BJ (cell line): ENCODE measurements at regions of chr19 and their contacts with region 1.

Region 1: DNA sequence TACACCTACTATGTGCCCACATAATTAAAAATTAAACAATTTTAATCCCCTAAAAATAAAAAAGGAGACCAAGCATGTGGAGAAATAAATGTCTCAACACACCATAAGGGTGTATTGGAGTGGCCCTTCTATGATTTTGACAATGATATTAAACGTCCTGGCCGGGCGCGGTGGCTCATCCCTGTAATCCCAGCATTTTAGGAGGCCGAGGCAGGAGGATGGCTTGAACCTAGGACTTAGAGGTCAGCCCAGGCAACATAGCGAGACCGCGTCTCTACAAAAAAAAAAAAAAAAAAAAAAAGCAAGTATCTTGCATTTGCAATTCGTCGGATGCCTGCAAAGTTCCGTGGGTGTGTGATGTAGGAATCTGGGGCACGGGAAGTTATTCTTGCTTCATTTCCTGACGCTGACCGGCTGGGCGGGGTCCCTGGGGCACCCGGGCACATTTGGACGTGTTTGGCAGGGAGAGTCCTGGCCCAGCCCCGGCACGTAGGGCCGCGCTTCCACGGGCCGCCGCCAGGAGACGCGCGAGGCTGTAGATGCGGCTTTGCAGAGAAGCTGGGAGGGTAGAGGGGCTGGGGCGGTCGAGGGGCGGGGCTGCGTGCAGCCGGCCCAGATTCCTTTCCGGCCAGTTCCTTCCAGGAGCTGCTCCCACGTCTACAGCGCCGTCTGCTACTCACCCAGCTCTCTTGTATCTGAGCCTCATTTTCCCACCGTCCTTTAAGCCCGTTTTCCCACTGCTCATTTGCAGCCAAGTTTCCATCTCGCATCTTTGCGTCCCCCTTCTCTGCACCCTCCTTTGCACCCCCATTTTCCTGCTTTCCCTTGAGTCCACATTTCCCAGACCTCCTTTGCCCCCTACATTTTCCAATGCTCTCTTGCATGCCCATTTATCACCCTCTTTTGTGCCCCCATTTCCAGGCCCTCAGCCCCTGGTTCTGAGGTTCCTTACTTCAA is 2.2 kb upstream of the TSPAN16 start:
- DNase-seq: peak; percentile 54
- H3K4me3 ChIP-seq: peak overlapping the region; percentile 28
- H3K27me3 ChIP-seq: 0 out of 2 replicates have a peak, but pooled peaks cover 1% of the 10 kb centered on the region
- CTCF ChIP-seq: peak; percentile 100

Region 2: DNA sequence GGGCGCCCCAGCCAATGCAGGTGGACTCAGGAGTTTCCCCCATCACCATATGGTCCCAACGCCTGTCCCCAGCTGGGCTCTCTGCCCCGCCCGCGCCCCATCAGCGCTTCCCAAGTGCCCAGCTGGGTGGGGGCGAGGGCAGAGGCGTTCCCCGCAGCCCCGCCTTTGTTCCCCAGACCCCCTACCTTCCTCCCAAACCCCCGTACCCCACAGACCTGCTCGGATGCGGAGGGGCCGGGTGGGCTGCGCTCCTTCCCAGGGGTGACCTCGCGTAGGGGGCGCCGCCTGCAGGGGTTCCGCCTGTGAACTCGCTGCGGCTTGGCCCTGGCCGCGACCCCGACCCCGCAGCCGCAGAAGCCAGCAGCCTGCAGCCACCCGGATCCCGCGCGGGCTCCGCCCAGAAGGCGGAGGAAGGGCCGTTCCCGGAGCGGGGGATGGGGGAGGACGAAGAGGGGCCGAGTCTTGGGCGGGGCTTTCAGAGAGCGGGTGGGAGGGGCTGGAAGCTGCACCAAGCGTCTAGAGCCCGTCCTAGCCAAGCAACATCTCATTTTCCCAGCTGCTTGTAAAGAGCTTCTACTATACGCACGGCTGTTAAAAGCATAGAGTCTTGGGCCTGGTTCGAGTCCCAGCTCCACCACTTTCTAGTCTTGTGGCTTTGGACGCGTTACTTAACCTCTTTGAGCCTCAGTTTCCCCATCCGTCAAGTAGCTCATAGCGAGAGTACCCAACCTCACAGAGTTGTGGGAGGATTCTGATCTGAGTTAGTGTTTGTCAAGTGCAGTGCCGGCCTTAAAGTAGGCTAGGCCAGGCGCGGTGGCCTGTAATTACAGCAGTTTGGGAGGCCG is 45.8 kb after region 1 on chr19 and contains the start of gene RAB3D:
- CTCF ChIA-PET with region 1: interaction called, 10 read pairs
- POLR2A ChIA-PET with region 1: no interaction called
- DNase-seq: no peak
- H3K4me3 ChIP-seq: peak within 1 kb of the TSS; percentile 67
- H3K27me3 ChIP-seq: no peaks in the 10 kb centered on the region
- CTCF ChIP-seq: no peak
- polyA plus RNA-seq, gene RAB3D: 9.7 and 12.0 TPM in 2 replicates

Region 3: DNA sequence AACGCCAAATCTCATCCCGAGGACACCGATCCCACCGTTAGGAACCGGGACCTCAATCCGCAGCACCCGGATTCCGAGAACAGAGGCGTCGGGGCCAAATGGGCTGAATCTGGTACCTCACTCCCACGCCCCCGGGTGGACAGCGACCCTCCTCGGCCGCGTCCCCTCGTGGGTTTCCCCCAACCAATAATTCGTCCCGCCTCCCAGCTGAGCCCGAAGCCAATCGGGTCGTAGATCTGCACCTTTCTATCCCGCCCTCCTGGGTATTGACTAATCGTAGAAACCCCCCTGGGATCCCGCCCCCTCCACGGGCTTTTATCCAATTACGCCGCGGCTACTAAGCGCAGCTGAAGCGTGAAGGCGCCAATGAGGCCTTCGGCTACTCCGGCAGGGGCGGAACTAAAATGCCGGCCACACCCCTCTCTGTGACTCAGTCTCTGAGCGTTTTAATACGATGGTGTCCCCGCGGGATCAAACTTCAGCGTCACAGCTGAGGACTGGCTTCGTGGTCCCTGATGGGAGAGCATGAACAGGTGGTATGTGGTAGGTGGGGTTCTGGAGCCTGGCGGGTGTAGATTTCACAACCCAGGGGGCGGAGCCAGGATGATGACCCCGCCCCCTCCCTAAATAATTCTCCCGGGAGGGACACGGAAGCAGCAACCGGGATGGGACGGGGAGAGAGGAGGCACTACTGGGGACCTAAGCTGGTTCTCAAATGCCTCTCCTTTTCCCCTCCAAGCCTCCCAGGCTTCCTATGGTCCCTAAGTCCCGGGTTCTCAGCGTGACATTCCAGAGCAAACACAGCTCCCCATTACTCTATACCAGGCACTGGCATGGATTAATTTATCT is 52.6 kb after region 1 on chr19 and contains the starts of genes CCDC159 and TMEM205:
- CTCF ChIA-PET with region 1: interaction called, 6 read pairs
- POLR2A ChIA-PET with region 1: interaction called, 12 read pairs
- DNase-seq: peak; percentile 96
- H3K4me3 ChIP-seq: peak within 1 kb of the TSS; percentile 69
- H3K27me3 ChIP-seq: no peaks in the 10 kb centered on the region
- CTCF ChIP-seq: no peak; the same call in 1 of the 2 replicates
- polyA plus RNA-seq, gene CCDC159: 16.3 and 21.4 TPM in 2 replicates
- polyA plus RNA-seq, gene TMEM205: 89.8 and 107 TPM in 2 replicates

Region 4: GRCh38 chr19:11374433-11375142 is 80.9 kb after region 1 on chr19 and contains the start of gene SWSAP1:
- CTCF ChIA-PET with region 1: interaction called, 19 read pairs
- POLR2A ChIA-PET with region 1: no interaction called
- DNase-seq: peak; percentile 98
- H3K4me3 ChIP-seq: peak within 1 kb of the TSS; percentile 63
- H3K27me3 ChIP-seq: no peaks in the 10 kb centered on the region
- CTCF ChIP-seq: no peak
- polyA plus RNA-seq, gene SWSAP1: 1.0 TPM in 2 replicates

Region 5: GRCh38 chr19:11446652-11447301 is 153.1 kb after region 1 on chr19:
- CTCF ChIA-PET with region 1: interaction called, 20 read pairs
- POLR2A ChIA-PET with region 1: no interaction called
- DNase-seq: no peak
- H3K4me3 ChIP-seq: no peak overlapping the region
- H3K27me3 ChIP-seq: no peaks in the 10 kb centered on the region
- CTCF ChIP-seq: peak; percentile 80

Region 6: GRCh38 chr19:11519138-11519537 is 225.4 kb after region 1 on chr19:
- CTCF ChIA-PET with region 1: no interaction called
- POLR2A ChIA-PET with region 1: no interaction called
- DNase-seq: no peak
- H3K4me3 ChIP-seq: no peak overlapping the region
- H3K27me3 ChIP-seq: no peaks in the 10 kb centered on the region
- CTCF ChIP-seq: no peak